Cardiac septum (tissue), 1 donor: ENCODE measurements at regions of chr9 and their contacts with region 1.

Region 1: DNA sequence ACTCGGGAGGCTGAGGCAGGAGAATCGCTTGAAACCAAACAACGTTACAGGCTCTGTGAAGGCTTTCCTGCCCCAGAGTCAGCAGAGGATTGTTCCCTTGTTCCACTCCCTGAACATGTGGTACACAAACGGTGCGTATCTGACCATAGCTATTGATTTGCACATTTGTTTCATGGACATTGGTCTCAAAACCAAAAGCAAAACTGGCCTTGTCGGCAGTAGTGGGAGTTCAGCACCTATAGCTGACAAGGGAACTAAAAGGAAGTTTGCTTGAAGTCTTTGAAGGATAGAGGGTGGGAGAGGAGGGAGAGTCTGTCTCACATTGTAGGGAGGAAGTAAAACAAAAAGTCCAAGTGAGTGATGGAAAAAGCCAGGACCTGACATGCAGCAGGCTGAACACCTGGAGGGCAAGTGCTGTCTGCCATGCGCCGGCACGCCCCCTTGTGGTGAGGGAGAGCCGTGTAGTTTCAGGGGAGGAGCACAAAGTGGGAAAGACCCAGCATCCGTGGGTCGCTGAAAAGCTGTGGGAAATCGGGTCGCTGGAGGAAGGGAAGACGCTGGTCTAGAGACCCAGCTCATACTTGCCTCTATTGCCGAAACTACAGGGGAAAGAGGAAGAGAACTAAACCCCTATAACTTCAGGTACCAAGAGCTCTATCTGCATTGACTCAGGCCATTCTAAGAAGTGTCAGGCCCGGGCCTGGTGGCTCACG is 58.0 kb downstream of the RAD23B start:
- DNase-seq: peak; percentile 90

Region 2: GRCh38 chr9:107239474-107239873 is 101.6 kb before region 1 on chr9:
- intact Hi-C with region 1: loop called (anchors 5 kb)
- DNase-seq: no peak

Region 3: GRCh38 chr9:107286044-107286443 is 55.0 kb before region 1 on chr9:
- intact Hi-C with region 1: loop called (anchors 5 kb)
- DNase-seq: no peak